A673 (cell line): ENCODE measurements at regions of chr15 and their contacts with region 1.

Region 1: DNA sequence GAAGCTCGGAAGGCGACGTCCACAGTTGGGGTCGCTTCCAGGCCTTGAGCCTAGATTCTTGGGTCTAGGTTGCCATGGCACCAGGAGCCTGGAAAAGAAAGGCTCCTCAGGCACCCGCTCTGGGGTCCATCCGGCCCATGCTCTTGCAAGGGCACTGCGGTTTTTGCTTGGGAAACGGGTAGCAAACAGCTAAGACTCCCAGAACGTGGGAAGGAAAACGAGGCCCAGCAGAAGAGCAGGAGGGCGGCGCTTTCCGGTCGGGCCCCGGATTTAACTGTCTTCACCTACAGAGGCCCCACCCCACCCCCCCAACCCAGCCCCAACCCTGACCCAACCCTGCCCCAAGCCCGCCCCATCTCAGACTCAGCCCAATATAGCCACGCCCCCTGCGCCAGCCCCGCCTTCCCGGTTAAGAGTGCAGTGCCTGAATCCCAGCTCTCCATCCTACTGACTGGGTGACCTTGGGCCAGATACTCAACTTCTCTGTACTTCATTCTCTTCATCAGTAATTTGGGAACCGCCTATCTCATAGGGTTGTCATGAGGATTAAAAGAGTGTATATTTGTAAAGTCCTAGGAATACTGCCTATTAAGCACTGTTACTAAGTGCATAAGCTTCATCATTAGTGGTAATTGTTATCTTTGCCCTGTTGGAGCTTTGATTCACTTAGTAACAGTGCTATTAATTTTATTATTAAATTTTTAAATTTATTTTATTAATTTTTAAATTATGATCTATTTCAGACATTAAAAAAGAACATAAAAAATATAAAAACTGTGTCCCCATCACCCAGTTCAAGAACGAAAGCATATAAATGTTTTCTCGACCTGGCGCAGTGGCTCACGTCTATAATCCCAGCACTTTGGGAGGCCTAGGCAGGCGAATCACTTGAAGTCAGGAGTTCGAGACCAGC is 28.4 kb upstream of the SMAD6 start:
- DNase-seq: no peak
- H3K4me3 ChIP-seq: no peak overlapping the region
- H3K27ac ChIP-seq: no peak overlapping the region
- H3K4me1 ChIP-seq: no peaks in the 10 kb centered on the region
- H3K27me3 ChIP-seq: no peaks in the 10 kb centered on the region
- CTCF ChIP-seq: no peak

Region 2: DNA sequence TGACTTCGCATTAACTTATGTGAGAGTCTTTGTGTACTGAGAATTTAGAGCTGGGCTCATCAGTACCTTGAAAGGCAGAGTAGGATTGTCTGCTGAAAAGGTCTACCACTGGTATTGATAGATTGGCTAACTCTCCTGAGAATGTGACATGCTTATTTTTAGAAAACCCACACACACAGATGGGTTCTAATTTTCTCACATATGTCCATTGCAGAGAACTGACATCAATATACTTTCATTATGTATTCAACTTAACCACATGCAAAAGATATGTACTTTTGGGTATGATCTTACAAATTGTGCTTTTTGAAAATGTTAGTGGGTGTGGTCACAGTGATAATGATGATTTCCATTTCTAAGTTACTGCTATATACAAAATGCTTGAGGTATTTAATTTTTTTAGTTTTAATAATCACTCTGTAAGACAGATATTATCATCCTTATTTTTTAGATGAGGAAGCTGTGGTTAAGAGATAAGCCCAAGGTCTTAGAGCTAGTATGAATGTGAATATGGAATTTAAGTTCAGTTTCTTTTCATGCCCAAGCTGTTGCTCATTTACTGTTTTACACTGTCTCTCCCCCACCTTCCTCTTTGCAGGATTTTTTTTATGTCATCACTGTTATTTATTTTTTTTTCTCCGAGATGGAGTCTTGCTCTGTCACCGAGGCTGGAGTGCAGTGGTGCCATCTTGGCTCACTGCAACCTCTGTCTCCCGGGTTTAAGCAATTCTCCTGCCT is 891.1 kb after region 1 on chr15:
- CTCF ChIA-PET with region 1: no interaction called
- POLR2A ChIA-PET with region 1: interaction called, 10 read pairs
- intact Hi-C with region 1: no loop called
- DNase-seq: no peak
- H3K4me3 ChIP-seq: no peak overlapping the region
- H3K27ac ChIP-seq: no peak overlapping the region
- H3K4me1 ChIP-seq: peaks cover 35% of the 10 kb centered on the region
- H3K27me3 ChIP-seq: no peaks in the 10 kb centered on the region
- CTCF ChIP-seq: no peak